ENCODE measurements at regions of chr10 and their contacts with region 1.

Region 1: DNA sequence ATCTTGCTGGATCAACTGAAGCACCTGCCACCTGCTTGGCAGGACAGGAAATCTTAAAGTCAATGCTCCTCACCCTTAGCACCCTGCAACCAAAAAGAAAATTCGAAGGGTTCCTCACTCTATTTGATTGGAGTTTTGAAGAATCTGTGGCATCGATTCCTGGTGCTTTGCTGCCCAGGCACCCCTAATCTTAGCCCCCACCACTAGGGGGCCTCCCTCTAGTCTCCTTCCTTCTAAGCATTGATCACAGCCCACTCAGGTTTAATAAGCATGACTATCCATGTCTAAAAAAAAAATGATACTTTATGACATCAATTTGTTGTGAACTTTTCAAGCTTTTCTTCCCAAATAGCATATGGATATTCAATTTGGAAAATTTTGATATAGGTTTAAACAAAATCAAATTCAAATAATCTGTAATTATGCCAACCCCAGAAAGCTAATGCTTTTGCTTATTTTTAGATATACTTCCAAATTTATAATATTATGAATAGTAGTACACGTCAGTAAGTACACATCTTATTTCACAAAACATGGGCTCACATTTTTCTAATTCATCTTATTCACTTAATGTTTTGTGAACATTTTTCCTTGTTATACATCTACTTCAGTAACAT is 45.3 kb downstream of the NRG3 start:
- DNase-seq: no peak
- ATAC-seq: no peak
- H3K4me3 ChIP-seq: no peak overlapping the region
- H3K4me3 Mint-ChIP-seq: no peak overlapping the region
- H3K27ac ChIP-seq: no peak overlapping the region
- H3K27ac Mint-ChIP-seq: no peak overlapping the region
- H3K4me1 ChIP-seq: no peaks in the 10 kb centered on the region
- H3K4me1 Mint-ChIP-seq: no peaks in the 10 kb centered on the region
- H3K27me3 ChIP-seq: no peaks in the 10 kb centered on the region
- H3K27me3 Mint-ChIP-seq: no peaks in the 10 kb centered on the region
- CTCF ChIP-seq: no peak

Region 2: GRCh38 chr10:81981724-81982123 is 61.4 kb after region 1 on chr10:
- intact Hi-C with region 1: loop called (anchors 10 kb)
- DNase-seq: no peak
- ATAC-seq: no peak
- H3K4me3 ChIP-seq: no peak overlapping the region
- H3K4me3 Mint-ChIP-seq: no peak overlapping the region
- H3K27ac ChIP-seq: no peak overlapping the region
- H3K27ac Mint-ChIP-seq: no peak overlapping the region
- H3K4me1 ChIP-seq: no peaks in the 10 kb centered on the region
- H3K4me1 Mint-ChIP-seq: no peaks in the 10 kb centered on the region
- H3K27me3 ChIP-seq: no peaks in the 10 kb centered on the region
- H3K27me3 Mint-ChIP-seq: no peaks in the 10 kb centered on the region
- CTCF ChIP-seq: no peak

Measured in natural killer cell (primary cell).